ENCODE measurements at regions of chr10 and their contacts with region 1.

Region 1: DNA sequence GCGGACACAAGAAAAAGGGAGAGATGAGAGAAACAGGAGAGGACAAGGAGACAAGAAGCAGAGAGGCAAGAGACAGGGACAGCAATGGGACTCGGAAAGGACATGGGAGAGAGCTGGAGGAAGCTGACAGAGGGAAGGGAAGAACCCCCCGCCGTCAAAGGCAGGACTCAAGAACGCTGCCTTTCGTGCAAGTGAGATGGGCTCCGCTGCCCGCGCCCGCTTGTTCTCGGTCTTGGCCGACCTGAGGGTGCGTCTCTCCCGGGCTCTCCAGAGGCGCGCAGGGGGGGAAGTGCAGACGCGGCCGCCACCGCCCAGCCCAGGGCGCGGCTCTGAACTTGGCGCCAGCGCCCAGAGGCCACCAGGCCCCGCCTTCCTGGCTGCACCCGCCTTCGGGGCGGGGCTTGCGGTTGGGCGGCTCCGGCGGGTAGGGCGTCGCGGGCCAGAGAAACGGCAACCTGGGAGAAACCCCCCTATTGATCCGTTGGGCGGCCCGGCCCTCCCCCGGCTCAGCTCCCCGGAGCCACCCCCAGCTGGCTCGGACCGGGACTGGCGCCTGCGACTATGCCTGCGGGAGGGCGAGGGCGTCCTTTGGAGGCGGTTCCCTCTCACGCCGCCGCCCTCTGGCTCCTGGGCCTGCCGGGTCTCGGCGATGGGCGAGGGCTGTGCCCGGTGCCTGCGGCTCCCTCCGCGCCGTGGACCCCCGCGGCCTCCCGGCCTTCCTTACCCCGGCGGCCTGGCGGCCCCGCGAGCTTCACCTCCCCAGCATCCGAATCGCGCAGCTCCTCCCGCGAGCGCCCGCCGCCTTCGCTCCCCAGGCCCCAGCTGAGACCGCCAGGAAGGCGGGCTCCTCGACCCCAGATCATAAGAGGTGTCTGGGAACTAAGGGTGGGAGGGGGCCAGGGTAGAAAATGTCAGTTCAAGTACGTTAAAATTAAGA is 2.2 kb upstream of the ANTXRL start:
- DNase-seq: peak; percentile 91
- H3K4me3 ChIP-seq: peak overlapping the region; percentile 65 to 83 (median 74)
- H3K27ac ChIP-seq: peak overlapping the region; percentile 75 to 86 (median 80)
- H3K4me1 ChIP-seq: peaks cover 0 to 30% (median 17%) of the 10 kb centered on the region in 4 donors
- H3K27me3 ChIP-seq: no peaks in the 10 kb centered on the region
- CTCF ChIP-seq: no peak
- EP300 ChIP-seq: no peak
- POLR2A ChIP-seq: no peak

Region 2: DNA sequence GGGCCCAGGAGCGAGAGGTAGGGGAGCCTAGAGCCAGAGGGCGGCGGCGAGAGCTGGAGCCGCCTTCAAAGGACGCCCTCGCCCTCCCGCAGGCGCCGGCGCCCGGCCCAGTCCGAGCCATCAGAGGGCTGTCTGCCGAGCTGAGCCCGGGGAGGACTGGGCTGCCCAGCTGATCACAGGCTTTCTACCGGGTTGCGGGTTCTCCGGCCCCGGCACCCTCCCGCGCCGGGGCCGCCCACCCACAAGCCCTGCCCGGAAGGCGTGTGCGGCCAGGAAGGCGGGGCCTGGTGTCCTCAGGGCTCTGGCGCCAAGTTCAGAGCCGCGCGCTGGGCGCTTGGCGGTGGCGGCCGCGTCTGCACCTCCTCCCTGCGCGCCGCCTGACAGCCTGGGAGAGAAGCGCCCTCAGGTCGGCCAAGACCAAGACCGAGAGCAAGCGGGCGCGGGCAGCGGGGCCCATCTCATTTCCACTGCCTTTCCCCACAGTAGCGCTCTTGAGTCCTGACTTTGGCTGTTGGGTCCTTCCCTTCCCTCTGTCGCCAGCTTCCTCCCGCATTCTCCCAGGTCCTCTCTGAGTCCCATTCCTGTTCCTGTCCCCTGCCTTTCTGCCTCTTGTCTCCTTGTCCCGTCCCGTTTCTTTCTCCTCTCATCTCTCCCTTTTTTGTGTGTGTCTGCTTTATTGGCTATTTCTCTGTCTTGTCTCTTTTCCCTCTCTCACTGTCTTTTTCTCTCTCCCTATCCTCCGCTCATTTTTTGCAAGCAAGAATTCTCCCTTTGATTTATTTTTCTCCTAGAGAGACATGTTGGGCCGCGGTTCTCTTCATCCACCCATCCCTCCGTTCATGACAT is 177.9 kb before region 1 on chr10:
- intact Hi-C with region 1: loop called (anchors 5 kb)
- DNase-seq: peak; percentile 78
- H3K4me3 ChIP-seq: peak overlapping the region; percentile 49 to 62 (median 58)
- H3K27ac ChIP-seq: peak overlapping the region in 3 of 4 donors; percentile 47 to 63 (median 61)
- H3K4me1 ChIP-seq: peaks cover 0 to 9% (median 7%) of the 10 kb centered on the region in 4 donors
- H3K27me3 ChIP-seq: no peaks in the 10 kb centered on the region
- CTCF ChIP-seq: peak in 1 of 4 experiments; percentile 7
- EP300 ChIP-seq: no peak
- POLR2A ChIP-seq: no peak

Region 3: GRCh38 chr10:46228563-46229071 is 55.9 kb before region 1 on chr10:
- intact Hi-C with region 1: loop called (anchors 5 kb)
- DNase-seq: peak; percentile 86
- H3K4me3 ChIP-seq: no peak overlapping the region
- H3K27ac ChIP-seq: no peak overlapping the region
- H3K4me1 ChIP-seq: no peaks in the 10 kb centered on the region
- H3K27me3 ChIP-seq: no peaks in the 10 kb centered on the region
- CTCF ChIP-seq: peak; percentile 73 to 92 (median 82)
- EP300 ChIP-seq: no peak
- POLR2A ChIP-seq: no peak

Region 4: DNA sequence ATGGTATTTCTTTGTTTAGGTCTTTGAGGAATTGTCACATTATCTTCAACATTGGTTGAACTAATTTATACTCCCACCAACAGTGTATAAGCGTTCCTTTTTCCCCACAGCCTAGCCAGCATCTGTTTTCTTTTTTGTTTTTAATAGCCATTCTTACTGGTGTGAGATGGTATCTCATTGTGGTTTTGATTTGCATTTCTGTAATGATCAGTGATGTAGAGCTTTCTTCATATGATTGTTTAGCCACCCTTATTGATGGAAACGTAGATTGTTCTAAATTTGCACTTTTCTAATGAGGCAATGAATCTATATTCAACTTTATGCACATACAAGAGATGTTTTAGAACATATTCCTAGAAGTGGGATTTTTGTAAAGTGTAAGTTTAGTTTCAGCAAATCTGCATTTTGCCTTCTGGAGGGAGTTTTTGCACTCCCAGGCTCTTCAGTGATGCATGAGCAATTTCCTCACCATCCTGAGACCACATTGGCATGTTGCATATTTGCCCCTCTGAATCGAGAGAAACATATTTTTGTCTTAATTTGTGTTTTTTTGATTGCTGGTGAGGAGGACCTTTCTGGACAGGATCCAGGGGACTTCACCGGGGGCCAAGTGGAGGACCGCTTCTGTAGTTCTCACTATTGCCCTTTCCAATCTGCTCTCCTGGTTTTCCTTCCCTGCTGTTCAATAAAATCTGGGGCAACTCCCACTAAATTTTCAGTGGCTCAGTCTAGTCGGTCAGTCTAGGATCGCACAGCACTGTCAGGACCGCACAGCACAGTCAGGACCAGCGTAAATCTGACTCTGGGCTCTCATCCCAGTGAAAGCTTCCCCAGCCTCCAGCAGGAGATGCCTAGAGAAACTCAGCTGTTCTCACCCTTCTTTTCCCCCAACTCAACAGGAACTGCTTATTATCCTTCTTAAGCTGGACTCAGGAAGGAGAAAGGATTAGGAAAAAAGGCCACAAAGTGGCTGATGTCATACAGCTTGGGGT is 783.7 kb after region 1 on chr10:
- intact Hi-C with region 1: no loop called
- DNase-seq: peak; percentile 28
- H3K4me3 ChIP-seq: no peak overlapping the region
- H3K27ac ChIP-seq: no peak overlapping the region
- H3K4me1 ChIP-seq: no peaks in the 10 kb centered on the region
- H3K27me3 ChIP-seq: no peaks in the 10 kb centered on the region
- CTCF ChIP-seq: no peak
- EP300 ChIP-seq: no peak
- POLR2A ChIP-seq: no peak